Calu3 (cell line): ENCODE measurements at regions of chr6 and their contacts with region 1.

Region 1: DNA sequence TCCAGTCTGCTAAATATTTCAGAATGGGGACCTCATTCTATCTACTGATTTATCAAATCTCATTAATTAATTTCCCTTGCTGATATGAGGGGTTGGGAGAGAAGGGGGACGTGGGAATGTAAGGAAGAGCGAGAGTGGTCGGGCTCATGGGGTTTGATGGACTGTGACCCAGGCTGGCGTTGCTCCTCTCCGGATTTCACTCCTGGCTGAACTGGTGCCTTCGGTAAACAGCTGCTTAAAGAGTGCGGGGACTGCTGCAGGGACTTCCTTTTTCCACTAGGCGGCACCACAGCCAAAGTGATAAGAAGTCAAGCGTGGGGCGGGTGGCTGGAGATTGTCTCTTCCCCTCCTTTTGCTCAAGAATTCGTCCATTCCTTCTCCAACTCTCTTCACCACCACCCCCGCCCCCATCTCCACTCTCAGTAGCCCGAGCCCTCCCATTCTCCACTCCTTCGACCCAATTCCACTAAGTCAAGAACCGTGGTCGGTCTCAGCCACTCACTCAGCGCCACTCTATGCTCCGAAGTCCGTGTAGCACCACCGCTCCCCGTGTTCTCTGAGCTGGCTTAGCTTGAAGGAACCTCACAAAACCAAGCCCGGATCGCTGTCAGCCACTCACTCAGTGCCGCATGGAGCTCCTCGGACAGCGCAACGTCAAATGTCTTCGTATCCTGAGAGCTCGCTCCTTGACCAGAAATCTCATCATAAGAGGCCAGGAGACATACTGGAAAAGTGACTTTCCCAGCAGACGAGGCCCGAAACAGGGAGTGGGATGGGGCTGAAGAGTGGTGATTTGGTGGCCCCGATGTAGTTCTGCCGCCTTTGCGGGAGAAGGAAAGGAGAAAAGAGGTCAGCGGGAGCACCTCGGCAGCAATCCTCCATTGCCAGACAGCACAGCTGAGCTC is 9.7 kb downstream of the TRIM31 start:
- DNase-seq: peak; percentile 90
- H3K4me3 Mint-ChIP-seq: peak overlapping the region; percentile 87
- H3K27ac Mint-ChIP-seq: peak overlapping the region; percentile 70
- H3K4me1 Mint-ChIP-seq: peaks cover 61% of the 10 kb centered on the region
- H3K27me3 Mint-ChIP-seq: no peaks in the 10 kb centered on the region
- CTCF ChIP-seq: peak; percentile 94

Region 2: DNA sequence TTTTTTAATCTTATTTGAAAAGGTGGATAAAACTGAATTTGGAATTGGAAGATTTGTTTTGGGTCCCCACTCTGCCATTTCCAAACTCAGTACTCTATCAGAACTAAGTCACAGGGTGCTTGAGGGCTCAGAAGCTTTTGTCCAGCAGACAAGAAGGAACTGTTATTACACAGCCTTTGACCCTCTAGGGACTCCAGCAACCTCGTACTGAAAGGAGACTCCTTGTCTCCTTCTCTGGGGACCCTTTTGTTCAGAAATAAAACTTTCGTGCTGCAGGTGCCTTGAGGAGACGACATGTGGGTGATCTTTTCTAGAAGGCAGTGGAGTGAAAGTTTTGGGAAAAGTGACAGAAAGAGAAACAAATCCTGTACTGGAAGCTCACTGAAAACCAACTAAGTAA is 49.5 kb before region 1 on chr6:
- CTCF ChIA-PET with region 1: no interaction called
- intact Hi-C with region 1: no loop called
- DNase-seq: no peak
- H3K4me3 Mint-ChIP-seq: no peak overlapping the region
- H3K27ac Mint-ChIP-seq: no peak overlapping the region
- H3K4me1 Mint-ChIP-seq: no peaks in the 10 kb centered on the region
- H3K27me3 Mint-ChIP-seq: no peaks in the 10 kb centered on the region
- CTCF ChIP-seq: no peak

Region 3: GRCh38 chr6:30066577-30067459 is 36.4 kb before region 1 on chr6 and contains the start of gene PPP1R11:
- CTCF ChIA-PET with region 1: no interaction called
- intact Hi-C with region 1: loop called (anchors 2 kb)
- DNase-seq: peak; percentile 98
- H3K4me3 Mint-ChIP-seq: peak within 1 kb of the TSS; percentile 82
- H3K27ac Mint-ChIP-seq: peak within 1 kb of the TSS; percentile 99
- H3K4me1 Mint-ChIP-seq: peaks cover 42% of the 10 kb centered on the region
- H3K27me3 Mint-ChIP-seq: peaks cover 7% of the 10 kb centered on the region
- CTCF ChIP-seq: no peak
- total RNA-seq, gene PPP1R11: 72.8 and 75.2 TPM in 2 replicates

Region 4: DNA sequence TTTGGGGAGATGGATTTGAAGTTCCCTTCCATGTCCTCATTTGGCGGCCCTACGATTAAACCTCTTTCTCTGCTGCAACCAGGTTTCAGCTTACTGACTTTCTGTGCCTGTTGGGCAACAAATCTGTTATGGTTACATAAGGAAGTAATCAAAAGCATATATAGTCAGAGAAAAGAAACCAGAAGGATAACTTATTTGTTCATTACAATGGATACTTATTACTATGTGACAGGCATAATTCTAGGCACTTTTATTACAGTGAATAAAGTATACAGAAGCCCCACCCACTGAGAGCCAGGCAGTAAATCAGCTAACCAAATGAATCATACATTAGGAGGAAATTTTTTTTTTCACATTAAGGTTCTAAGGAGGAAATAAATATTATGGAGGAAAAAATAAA is 19.3 kb after region 1 on chr6:
- CTCF ChIA-PET with region 1: interaction called, 12 read pairs
- intact Hi-C with region 1: no loop called
- DNase-seq: peak; percentile 49
- H3K4me3 Mint-ChIP-seq: no peak overlapping the region
- H3K27ac Mint-ChIP-seq: peak overlapping the region; percentile 44
- H3K4me1 Mint-ChIP-seq: peaks cover 51% of the 10 kb centered on the region
- H3K27me3 Mint-ChIP-seq: no peaks in the 10 kb centered on the region
- CTCF ChIP-seq: no peak

Region 5: GRCh38 chr6:30130887-30131862 is 28.0 kb after region 1 on chr6:
- CTCF ChIA-PET with region 1: interaction called, 168 read pairs
- intact Hi-C with region 1: loop called (anchors 1 kb)
- DNase-seq: peak; percentile 79
- H3K4me3 Mint-ChIP-seq: peak overlapping the region; percentile 33
- H3K27ac Mint-ChIP-seq: peak overlapping the region; percentile 46
- H3K4me1 Mint-ChIP-seq: peaks cover 47% of the 10 kb centered on the region
- H3K27me3 Mint-ChIP-seq: no peaks in the 10 kb centered on the region
- CTCF ChIP-seq: peak; percentile 97

Region 6: DNA sequence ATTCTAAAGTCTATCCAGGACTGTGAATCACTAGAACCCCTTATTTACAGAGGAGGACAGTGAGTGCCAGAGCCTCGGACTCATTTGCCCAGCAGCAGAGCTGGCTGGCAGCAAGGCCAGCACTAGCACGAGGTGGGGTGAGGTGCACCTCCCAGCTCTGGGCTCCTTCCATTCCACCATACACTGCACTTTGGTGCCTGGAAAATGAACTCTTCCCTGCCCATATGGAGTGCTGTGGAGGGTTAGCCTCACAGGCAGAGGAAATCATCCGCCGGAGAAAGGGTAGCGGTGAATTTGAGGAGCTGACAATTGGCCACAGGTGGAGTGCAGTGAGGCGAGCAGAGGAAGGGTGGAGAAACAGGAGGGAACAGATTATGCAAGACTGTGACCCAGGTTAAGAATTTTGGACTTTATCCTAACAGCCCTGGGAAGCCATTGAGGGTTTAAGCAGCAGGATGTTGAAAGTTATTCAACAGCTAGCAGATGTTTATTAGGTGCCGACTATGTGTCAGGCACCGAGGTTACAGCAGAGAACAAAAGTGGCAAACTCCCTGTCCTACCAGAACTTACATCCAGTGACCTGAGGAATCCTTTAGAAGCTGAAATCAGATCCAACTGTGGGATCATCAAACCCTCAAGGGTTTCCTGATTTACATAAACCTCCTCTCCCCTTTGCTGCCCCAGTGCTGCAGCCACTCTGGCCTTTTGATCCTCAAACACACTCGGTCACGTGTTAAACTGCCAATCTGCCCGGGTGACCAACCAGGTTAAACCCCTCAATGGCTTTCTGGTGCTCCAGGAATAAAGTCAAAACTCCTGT is 103.8 kb after region 1 on chr6:
- CTCF ChIA-PET with region 1: no interaction called
- intact Hi-C with region 1: no loop called
- DNase-seq: peak; percentile 36
- H3K4me3 Mint-ChIP-seq: peak overlapping the region; percentile 61
- H3K27ac Mint-ChIP-seq: peak overlapping the region; percentile 77
- H3K4me1 Mint-ChIP-seq: peaks cover 78% of the 10 kb centered on the region
- H3K27me3 Mint-ChIP-seq: no peaks in the 10 kb centered on the region
- CTCF ChIP-seq: no peak